GM10248 (cell line): ENCODE measurements at regions of chr15 and their contacts with region 1.

Region 1: GRCh38 chr15:65916664-65917406 is 47.5 kb downstream of the RAB11A start:
- DNase-seq: peak; percentile 85
- CTCF ChIP-seq: peak; percentile 90

Region 2: DNA sequence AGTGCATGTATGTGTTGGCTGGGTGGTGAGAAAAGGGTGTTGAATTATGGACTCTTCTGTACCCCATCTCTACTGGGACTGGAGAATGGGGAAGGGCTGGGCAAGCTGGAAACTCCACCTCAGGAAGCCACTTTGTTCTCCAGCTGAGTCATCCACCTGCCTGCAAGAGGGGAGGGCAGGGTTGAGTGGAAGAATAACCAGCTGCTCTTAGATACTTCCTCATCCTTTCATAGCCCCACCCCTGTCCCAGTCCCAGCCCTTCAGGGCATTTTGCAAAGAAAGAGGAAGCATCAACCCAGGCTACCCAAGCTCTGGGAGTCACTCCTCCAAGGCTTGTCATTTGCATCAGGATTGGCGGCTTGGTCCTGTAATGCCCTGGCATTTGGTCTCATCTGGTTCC is 14.5 kb before region 1 on chr15:
- CTCF ChIA-PET with region 1: interaction called, 43 read pairs
- POLR2A ChIA-PET with region 1: interaction called, 4 read pairs
- DNase-seq: peak; percentile 69
- CTCF ChIP-seq: no peak

Region 3: DNA sequence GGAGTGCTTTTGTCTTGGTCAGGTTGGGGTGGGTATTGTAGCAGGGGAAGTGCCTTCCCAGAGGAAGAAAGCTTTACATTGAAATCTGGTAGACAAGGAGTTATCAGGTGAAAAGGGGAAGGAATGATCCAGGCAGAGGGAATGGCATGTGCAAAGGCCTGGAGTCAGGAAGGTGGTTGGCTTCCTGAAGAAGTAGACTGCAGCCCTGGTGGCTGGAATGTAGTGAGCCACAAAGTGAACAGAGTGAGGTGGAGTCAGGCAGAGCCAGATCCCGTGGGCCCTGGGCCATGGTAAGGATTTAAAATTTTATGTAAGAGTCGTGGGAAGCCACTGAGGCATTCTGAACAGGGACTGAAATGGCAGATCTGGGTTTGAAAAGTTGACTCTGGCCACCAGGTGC is 10.7 kb after region 1 on chr15:
- CTCF ChIA-PET with region 1: interaction called, 17 read pairs
- POLR2A ChIA-PET with region 1: no interaction called
- DNase-seq: no peak
- CTCF ChIP-seq: no peak